OCI-LY7 (cell line): ENCODE measurements at regions of chr13 and their contacts with region 1.

Region 1: DNA sequence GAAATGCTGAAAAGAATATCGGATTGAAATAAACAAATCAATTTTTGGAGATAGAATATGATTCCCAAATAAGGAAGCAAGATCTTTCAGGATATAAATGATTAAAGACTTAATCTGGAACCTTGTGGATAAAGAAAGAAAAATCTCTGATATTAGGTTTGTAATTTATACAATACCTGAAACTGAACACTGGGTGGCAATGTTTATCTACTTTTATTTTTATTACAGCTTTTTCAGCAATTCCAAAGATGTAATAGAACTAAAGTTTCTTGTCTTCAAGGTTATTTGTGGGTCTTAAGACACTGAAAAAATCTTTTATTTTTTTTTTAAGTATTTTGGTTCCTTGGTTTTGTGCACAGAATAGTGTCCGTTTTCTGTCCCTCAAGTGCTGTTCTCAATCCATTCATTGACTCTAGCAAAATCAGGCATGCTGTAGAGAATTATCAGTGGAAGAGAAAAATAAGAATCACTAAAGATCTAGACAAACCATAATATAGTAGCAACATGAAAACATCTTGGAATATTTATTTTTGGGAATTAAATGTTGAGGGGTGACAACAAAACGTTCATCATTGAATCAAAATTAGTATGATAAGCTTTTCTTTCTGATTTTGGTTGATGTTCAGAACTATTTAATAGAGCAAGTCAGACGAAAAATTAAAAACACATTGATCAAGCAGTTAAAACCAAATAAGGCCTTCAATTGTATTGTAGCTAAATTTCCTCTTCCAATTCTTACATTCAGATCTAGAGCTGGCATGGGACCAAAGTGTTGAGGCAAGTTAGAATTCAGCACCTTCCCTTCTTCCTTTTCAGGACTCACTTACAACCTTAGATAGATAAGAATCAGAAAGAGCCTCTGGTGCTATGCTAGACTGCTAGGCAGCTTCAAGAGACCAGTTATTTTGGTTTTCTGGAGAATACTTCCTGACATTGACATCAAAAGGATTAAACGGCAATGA is 704.4 kb upstream of the PCDH20 start:
- DNase-seq: peak; percentile 63
- H3K4me3 ChIP-seq: no peak overlapping the region
- H3K27ac ChIP-seq: no peak overlapping the region
- H3K4me1 ChIP-seq: peaks cover 11% of the 10 kb centered on the region
- CTCF ChIP-seq: peak; percentile 90

Region 2: DNA sequence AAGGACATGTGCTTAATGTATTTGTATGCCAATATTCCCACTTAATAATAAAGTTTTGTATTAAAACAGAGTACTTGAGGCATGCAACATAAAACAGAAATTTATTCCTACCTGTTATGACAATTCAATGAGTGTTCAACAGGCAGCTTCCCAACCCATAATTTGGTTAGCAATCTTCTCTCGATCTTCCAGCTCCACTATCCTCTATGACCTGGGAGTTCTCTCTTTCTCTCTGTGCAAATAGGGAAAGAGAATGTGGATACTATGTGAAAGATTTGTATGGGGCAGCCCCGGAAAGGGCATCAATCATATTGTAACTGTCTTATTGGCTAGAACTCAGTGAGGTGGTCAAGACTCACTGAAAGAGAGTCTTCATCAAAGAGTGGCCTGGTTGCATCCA is 59.5 kb before region 1 on chr13:
- CTCF ChIA-PET with region 1: no interaction called
- POLR2A ChIA-PET with region 1: no interaction called
- intact Hi-C with region 1: no loop called
- DNase-seq: no peak
- H3K4me3 ChIP-seq: no peak overlapping the region
- H3K27ac ChIP-seq: no peak overlapping the region
- H3K4me1 ChIP-seq: no peaks in the 10 kb centered on the region
- CTCF ChIP-seq: no peak

Region 3: GRCh38 chr13:62280590-62280989 is 160.6 kb after region 1 on chr13:
- CTCF ChIA-PET with region 1: no interaction called
- POLR2A ChIA-PET with region 1: no interaction called
- intact Hi-C with region 1: no loop called
- DNase-seq: peak; percentile 33
- H3K4me3 ChIP-seq: no peak overlapping the region
- H3K27ac ChIP-seq: no peak overlapping the region
- H3K4me1 ChIP-seq: no peaks in the 10 kb centered on the region
- CTCF ChIP-seq: no peak

Region 4: GRCh38 chr13:62320129-62321108 is 200.4 kb after region 1 on chr13:
- CTCF ChIA-PET with region 1: no interaction called
- POLR2A ChIA-PET with region 1: interaction called, 3 read pairs
- intact Hi-C with region 1: loop called (anchors 5 kb)
- DNase-seq: peak; percentile 76
- H3K4me3 ChIP-seq: no peak overlapping the region
- H3K27ac ChIP-seq: no peak overlapping the region
- H3K4me1 ChIP-seq: peaks cover 14% of the 10 kb centered on the region
- CTCF ChIP-seq: peak; percentile 96

Region 5: DNA sequence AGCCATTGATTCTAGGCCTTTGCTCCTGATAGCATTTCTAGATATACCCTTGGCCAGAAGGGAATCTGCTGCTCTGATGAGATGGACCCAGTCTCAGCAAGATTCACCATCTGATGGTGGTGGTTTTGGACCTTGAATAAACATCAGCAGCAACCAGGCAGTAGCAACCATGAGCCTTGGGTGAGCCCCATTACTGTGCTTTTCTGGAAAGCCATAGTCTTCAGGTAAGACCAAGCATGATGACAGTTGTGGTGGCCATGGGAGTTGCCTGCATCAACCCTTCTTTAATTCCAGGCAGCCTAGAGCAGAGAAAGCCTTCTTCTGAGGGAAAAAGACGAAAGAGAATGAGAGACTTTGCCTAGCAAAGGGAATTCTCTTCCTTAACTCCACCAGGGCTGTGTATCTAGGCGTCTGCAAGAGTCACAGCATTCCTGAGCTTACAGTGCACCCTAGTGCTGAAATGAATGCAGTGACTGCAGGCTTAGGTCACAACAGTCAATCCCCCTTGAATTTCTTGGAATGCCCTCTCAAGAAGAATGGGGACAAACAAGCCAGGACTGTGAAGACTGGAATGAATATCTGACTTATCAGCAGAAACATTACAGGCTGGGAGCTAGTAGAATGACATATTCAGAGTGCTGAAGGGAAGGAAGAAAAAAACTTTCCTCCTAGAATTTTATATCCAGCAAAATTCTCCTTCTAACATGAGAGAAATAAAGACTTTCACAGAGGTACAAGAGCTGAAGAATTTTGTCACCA is 238.0 kb after region 1 on chr13:
- CTCF ChIA-PET with region 1: interaction called, 5 read pairs
- POLR2A ChIA-PET with region 1: interaction called, 3 read pairs
- intact Hi-C with region 1: loop called (anchors 1 kb)
- DNase-seq: peak; percentile 74
- H3K4me3 ChIP-seq: no peak overlapping the region
- H3K27ac ChIP-seq: no peak overlapping the region
- H3K4me1 ChIP-seq: peaks cover 3% of the 10 kb centered on the region
- CTCF ChIP-seq: peak; percentile 88

Region 6: DNA sequence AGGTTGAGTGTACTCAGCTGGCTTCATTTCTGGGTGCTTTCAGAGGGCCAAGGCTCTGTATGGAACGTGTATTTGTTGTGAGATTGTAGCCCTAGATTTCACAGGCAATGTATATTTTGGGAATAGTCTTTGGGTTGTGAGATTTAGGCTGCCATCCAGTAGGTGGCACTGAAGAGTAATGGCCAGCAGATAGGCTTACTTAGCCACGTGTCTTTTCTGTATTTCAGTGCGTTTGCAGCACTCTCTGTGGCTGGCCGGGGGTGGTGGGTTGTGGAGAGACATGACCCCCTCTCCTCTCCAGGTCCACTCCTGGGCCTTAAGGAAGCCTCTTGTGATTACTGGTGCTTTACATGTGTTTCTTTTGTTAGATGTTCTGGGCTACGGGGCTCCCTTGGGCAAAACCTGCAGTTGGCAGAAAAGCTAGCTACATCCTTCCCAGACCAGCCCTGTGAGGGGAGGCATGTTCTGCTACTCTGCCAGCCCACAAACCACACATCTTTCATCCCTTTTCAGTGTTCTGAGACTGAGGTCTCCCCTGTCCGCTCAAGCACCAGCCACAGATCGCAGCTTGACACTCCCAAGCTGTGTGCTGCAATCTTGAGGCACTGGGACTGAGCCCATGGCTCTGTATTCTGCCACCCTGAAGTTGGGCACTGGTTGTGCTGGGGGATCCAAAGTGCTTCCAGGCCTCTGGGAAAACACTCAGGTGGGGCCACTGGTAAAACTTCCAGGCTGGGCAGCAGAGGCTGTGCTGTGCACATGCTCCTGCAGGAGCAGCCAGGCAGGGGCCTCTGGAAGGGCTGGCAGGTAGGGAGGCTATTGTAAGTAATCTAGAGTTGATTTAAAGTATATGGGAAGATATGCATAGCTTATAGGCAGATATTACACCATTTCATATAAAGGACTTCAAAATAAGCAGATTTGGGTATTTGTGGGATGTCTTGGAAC is 392.4 kb after region 1 on chr13:
- CTCF ChIA-PET with region 1: no interaction called
- POLR2A ChIA-PET with region 1: no interaction called
- intact Hi-C with region 1: loop called (anchors 2 kb)
- DNase-seq: peak; percentile 70
- H3K4me3 ChIP-seq: no peak overlapping the region
- H3K27ac ChIP-seq: no peak overlapping the region
- H3K4me1 ChIP-seq: peaks cover 4% of the 10 kb centered on the region
- CTCF ChIP-seq: peak; percentile 90

Region 7: GRCh38 chr13:62643007-62643483 is 523.0 kb after region 1 on chr13:
- CTCF ChIA-PET with region 1: no interaction called
- POLR2A ChIA-PET with region 1: no interaction called
- intact Hi-C with region 1: loop called (anchors 10 kb)
- DNase-seq: no peak
- H3K4me3 ChIP-seq: peak overlapping the region; percentile 55
- H3K27ac ChIP-seq: peak overlapping the region; percentile 93
- H3K4me1 ChIP-seq: peaks cover 41% of the 10 kb centered on the region
- CTCF ChIP-seq: no peak